Motor neuron (in vitro differentiated cells): ENCODE measurements at regions of chr15 and their contacts with region 1.

Region 1: GRCh38 chr15:74291101-74292071 is 55.3 kb downstream of the CCDC33 start:
- ATAC-seq: peak; percentile 89 to 98 (median 90)
- H3K4me3 ChIP-seq: no peak overlapping the region
- H3K27ac ChIP-seq: peak overlapping the region; percentile 71 to 91
- H3K4me1 ChIP-seq: peaks cover 26 to 44% of the 10 kb centered on the region in 2 donors

Region 2: DNA sequence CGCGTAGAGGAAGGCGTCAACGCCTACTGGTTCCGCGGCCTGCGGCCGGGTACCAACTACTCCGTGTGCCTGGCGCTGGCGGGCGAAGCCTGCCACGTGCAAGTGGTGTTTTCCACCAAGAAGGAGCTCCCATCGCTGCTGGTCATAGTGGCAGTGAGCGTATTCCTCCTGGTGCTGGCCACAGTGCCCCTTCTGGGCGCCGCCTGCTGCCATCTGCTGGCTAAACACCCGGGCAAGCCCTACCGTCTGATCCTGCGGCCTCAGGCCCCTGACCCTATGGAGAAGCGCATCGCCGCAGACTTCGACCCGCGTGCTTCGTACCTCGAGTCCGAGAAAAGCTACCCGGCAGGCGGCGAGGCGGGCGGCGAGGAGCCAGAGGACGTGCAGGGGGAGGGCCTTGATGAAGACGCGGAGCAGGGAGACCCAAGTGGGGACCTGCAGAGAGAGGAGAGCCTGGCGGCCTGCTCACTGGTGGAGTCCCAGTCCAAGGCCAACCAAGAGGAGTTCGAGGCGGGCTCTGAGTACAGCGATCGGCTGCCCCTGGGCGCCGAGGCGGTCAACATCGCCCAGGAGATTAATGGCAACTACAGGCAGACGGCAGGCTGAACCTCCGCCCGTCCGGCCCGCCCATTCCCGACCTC is 156.9 kb before region 1 on chr15:
- in situ Hi-C with region 1: loop called in 1 of 9 experiments (anchors 10 kb)
- ATAC-seq: no peak
- H3K4me3 ChIP-seq: no peak overlapping the region
- H3K27ac ChIP-seq: no peak overlapping the region
- H3K4me1 ChIP-seq: peaks cover 41 to 47% of the 10 kb centered on the region in 2 donors

Region 3: GRCh38 chr15:74179341-74179841 is 112.0 kb before region 1 on chr15:
- in situ Hi-C with region 1: no loop called
- ATAC-seq: peak in 6 of 8 experiments; percentile 7 to 90 (median 45)
- H3K4me3 ChIP-seq: no peak overlapping the region
- H3K27ac ChIP-seq: no peak overlapping the region
- H3K4me1 ChIP-seq: peaks cover 29% of the 10 kb centered on the region in 2 donors

Region 4: GRCh38 chr15:74422650-74423430 is 131.5 kb after region 1 on chr15:
- in situ Hi-C with region 1: no loop called
- ATAC-seq: peak in 4 of 8 experiments; percentile 8 to 69 (median 65)
- H3K4me3 ChIP-seq: no peak overlapping the region
- H3K27ac ChIP-seq: peak overlapping the region; percentile 40 to 75
- H3K4me1 ChIP-seq: peaks cover 39 to 43% of the 10 kb centered on the region in 2 donors

Region 5: GRCh38 chr15:74464216-74464615 is 172.8 kb after region 1 on chr15:
- in situ Hi-C with region 1: no loop called
- ATAC-seq: no peak
- H3K4me3 ChIP-seq: no peak overlapping the region
- H3K27ac ChIP-seq: no peak overlapping the region
- H3K4me1 ChIP-seq: peaks cover 4 to 7% of the 10 kb centered on the region in 2 donors